Thyroid gland (tissue), 4 donors: ENCODE measurements at regions of chr6 and their contacts with region 1.

Region 1: DNA sequence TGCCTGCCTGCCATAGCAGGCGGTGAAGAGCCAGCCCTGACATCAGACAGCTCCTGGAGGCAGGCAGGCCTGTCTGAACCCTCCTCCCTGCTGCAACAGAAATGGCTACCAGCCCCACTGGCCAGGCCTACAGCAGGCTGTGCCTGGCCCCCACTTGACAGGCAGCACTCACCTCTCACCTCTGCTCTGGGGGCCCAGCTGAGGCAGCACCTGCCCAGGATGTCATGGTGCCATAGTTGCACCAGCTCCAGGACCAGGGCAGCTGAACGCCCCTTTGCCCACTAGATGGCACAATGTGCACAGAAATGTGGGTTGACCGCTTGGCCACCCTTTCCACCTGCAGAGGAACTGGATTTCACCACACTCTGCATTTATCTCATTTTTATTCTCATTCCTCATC is 30.6 kb downstream of the MRPL14 start:
- DNase-seq: peak; percentile 76 to 82
- H3K4me3 ChIP-seq: no peak overlapping the region
- H3K27ac ChIP-seq: no peak overlapping the region
- H3K4me1 ChIP-seq: no peaks in the 10 kb centered on the region
- H3K27me3 ChIP-seq: no peaks in the 10 kb centered on the region
- CTCF ChIP-seq: peak; percentile 46 to 88 (median 80)
- POLR2A ChIP-seq: no peak

Region 2: DNA sequence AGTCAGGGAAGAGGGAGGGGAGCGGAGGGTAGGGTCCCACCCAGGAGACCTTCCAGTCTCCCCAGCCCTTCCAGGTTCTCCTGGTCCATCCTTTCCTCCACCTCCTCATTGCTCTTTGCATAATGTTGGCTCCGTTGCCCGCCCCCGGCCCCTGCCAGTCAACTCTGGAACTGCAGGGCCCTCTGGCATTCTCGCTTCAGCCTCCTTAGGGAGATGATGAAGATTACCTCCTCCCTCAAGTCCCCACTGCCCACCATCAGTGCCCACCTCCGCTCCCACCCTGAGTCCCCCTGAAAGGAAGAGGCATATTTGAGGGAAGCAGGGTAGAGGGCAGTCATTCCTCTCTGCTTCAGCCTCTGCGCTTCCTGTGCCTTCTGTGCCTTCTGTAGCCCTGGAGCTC is 39.3 kb after region 1 on chr6:
- intact Hi-C with region 1: loop called (anchors 5 kb)
- DNase-seq: no peak
- H3K4me3 ChIP-seq: no peak overlapping the region
- H3K27ac ChIP-seq: no peak overlapping the region
- H3K4me1 ChIP-seq: peaks cover 0 to 4% of the 10 kb centered on the region in 2 donors
- H3K27me3 ChIP-seq: no peaks in the 10 kb centered on the region
- CTCF ChIP-seq: no peak
- POLR2A ChIP-seq: no peak

Region 3: DNA sequence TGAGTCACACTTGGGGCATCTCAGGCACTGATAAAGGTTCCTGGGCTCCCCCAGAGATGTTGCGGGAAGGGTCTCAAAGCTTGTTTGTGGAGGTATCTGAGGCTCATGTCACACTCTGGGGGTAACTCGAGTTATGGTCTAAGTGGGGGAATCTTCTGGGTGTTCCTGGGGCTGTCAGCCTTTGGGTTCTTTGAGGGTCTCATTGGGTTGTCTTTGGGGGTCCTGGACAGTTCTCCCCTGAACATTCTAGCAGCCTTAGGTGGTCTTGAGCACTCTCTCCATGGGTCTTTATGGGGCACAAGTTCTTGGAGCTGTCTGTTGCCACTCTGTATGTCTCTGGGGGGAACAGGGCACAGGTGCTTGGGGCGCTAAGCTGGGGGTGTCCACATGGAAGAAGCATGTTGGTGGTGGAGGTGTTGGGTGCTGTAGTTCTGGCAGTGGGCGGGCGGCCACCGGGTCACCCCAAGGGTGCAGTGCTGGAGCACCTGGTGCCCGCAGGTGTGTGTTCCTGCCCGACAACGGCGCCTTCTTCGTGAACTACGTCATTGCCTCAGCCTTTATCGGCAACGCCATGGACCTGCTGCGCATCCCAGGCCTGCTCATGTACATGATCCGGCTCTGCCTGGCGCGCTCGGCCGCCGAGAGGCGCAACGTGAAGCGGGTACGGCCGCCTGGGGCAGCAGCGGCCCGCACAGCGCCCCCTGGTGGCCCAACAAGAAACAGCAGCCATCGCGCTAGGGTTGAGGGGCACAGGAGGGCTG is 54.9 kb after region 1 on chr6:
- intact Hi-C with region 1: loop called (anchors 2 kb)
- DNase-seq: peak; percentile 73 to 76
- H3K4me3 ChIP-seq: no peak overlapping the region
- H3K27ac ChIP-seq: no peak overlapping the region
- H3K4me1 ChIP-seq: peaks cover 0 to 4% of the 10 kb centered on the region in 2 donors
- H3K27me3 ChIP-seq: no peaks in the 10 kb centered on the region
- CTCF ChIP-seq: peak; percentile 91 to 99 (median 98)
- POLR2A ChIP-seq: no peak

Region 4: DNA sequence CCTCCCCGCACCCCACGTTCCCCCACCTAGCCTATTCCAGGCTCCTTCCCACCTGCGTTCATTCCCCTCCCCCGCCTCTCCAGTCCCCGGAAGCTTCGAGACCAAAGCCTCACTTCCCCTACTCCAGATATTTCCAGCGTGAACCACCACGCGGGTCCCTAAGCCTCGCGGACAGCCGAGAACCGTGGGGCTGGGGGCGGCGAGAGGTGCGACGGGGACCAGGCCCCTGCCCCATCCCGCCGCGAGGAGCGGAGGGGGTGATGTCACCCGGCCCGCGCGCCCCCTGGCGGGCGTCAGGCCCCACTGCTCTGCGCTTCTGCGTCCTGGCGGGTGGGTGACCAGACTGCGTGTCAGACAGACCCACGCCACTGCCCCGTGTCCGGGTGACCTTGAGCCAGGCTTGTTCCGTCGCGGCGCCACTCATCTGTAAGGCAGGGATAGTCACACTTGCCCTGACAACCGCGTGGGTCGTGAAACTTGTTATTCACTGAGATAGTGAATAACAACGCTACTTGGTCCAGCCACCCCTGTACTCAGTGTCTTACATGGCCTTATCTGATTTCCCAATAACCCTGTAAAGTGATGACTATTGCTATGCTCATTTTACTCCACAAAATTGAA is 141.3 kb after region 1 on chr6:
- intact Hi-C with region 1: loop called (anchors 10 kb)
- DNase-seq: peak; percentile 80 to 84
- H3K4me3 ChIP-seq: peak overlapping the region in 2 of 3 donors; percentile 55 to 85
- H3K27ac ChIP-seq: peak overlapping the region; percentile 96 to 99 (median 97)
- H3K4me1 ChIP-seq: peaks cover 31 to 34% of the 10 kb centered on the region in 2 donors
- H3K27me3 ChIP-seq: no peaks in the 10 kb centered on the region
- CTCF ChIP-seq: peak; percentile 93 to 98 (median 96)
- POLR2A ChIP-seq: peak; percentile 10 to 44

Region 5: DNA sequence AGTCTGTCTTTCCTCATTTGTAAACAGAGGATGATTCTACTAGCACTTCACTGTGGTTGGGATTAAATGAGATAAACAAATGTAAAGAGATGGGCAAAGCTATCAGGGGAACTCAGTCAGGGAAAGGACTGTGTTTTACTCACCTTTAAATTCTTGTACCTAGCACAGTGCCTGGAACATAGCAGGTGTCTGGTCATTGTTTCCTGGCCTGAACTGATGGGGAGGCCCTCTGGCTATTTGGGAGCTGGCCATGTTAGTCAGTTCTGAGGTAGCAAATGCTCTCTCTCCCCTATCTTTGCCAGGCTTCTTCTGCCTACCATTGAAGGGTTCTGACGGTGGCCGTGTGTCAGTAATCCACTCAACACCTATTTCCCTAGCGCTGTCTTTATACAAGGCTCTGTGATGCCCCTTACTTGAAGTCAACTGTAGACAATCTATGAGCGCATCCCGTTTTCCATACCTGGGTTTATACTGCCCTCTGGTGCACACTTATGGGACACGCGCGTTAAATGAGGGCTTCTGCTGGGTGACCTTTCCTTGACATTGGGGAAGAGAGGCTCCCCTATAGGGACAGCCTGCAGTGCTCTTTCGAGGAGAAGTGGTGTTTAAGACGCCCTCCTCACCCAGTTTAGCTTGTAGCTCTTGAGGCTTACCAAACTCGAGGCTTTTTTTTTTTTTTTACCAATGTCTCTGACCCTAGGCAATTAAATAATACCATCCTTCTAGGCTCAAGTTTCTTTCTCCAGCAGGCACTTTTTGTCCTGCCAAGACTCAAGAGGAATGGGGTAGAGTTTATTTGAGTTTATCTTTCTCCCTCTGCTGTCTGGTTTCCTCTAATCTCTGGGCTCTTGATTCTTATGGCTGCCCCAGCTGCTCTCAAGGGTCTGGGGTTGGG is 241.9 kb after region 1 on chr6:
- intact Hi-C with region 1: loop called (anchors 5 kb)
- DNase-seq: peak; percentile 61 to 72
- H3K4me3 ChIP-seq: no peak overlapping the region
- H3K27ac ChIP-seq: peak overlapping the region in 2 of 3 donors; percentile 55 to 67
- H3K4me1 ChIP-seq: peaks cover 0 to 5% of the 10 kb centered on the region in 2 donors
- H3K27me3 ChIP-seq: no peaks in the 10 kb centered on the region
- CTCF ChIP-seq: peak; percentile 28 to 89 (median 76)
- POLR2A ChIP-seq: no peak